Spleen (tissue), 13 donors: ENCODE measurements at regions of chr2 and their contacts with region 1.

Region 1: GRCh38 chr2:168118733-168119514 is 128.5 kb downstream of the STK39 start:
- DNase-seq: no peak
- H3K4me3 ChIP-seq: no peak overlapping the region
- H3K27ac ChIP-seq: peak overlapping the region in 3 of 8 donors; percentile 4 to 28 (median 24)
- H3K4me1 ChIP-seq: peaks cover 0 to 16% (median 8%) of the 10 kb centered on the region in 6 donors
- H3K27me3 ChIP-seq: no peaks in the 10 kb centered on the region
- CTCF ChIP-seq: peak; percentile 19 to 76 (median 52)
- POLR2A ChIP-seq: no peak

Region 2: GRCh38 chr2:166539340-166540162 is 1579.4 kb before region 1 on chr2:
- intact Hi-C with region 1: loop called (anchors 5 kb)
- DNase-seq: no peak
- H3K4me3 ChIP-seq: no peak overlapping the region
- H3K27ac ChIP-seq: no peak overlapping the region
- H3K4me1 ChIP-seq: peaks cover 0 to 4% (median 2%) of the 10 kb centered on the region in 6 donors
- H3K27me3 ChIP-seq: no peaks in the 10 kb centered on the region
- CTCF ChIP-seq: peak; percentile 41 to 81 (median 65)
- POLR2A ChIP-seq: no peak

Region 3: GRCh38 chr2:167964650-167965413 is 154.1 kb before region 1 on chr2:
- intact Hi-C with region 1: loop called (anchors 10 kb)
- DNase-seq: no peak
- H3K4me3 ChIP-seq: no peak overlapping the region
- H3K27ac ChIP-seq: no peak overlapping the region
- H3K4me1 ChIP-seq: no peaks in the 10 kb centered on the region
- H3K27me3 ChIP-seq: no peaks in the 10 kb centered on the region
- CTCF ChIP-seq: no peak
- POLR2A ChIP-seq: no peak

Region 4: DNA sequence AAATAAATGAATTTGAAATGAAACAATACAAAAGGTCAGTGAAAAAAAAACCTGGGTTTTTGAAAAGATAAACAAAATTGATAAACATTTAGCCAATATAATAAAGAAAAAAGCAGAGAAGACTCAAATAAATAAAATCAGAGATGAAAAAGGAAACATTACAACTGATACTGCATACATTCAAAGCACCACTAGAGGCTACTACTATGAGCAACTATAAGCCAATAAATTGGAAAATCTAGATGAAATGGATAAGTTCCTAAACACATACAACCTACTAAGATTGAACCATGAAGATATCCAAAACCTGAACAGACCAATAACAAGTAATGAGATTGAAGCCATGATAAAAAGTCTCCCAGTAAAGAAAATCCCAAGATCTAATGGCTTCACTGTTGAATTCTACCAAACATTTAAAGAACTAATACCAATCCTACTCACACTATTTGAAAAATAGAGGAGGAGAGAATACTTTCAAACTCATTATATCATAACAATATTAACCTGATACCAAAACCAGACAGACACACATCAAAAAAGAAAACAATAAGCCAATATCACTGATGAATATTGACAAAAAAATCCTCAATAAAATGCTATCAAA is 256.4 kb after region 1 on chr2:
- intact Hi-C with region 1: no loop called
- DNase-seq: no peak
- H3K4me3 ChIP-seq: no peak overlapping the region
- H3K27ac ChIP-seq: no peak overlapping the region
- H3K4me1 ChIP-seq: peaks cover 0 to 8% (median 0%) of the 10 kb centered on the region in 6 donors
- H3K27me3 ChIP-seq: no peaks in the 10 kb centered on the region
- CTCF ChIP-seq: peak in 3 of 11 experiments; percentile 8 to 23 (median 23)
- POLR2A ChIP-seq: no peak

Region 5: DNA sequence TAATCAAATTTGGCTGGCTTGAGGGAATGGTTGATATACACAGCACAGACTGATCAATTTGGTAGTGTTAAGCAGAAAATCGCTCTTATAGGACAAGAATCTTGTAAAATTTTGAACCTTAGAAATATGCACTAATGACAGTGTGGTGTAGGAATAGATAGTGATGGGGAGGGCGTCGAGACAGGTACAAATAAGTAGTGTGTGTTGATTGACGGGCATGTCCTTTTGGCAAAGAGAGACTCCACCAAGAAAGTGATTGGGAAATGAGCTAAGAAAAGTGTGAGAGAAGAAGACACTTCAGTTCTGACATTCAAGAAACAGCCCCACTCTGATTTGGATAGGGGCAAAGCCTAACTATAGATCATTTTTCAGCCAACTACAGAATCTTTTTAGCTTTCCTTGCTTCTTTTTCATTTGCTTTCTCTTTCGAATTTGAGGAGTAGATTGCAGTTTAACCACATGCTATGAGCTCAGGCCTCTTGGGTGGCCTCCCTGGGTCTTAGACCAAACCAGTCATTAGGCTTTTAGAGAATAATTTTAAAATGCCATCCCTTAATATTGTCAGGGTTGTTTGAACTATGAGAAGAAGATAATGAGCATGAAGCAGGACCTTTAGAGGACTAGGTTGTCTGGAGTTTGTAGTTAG is 464.3 kb after region 1 on chr2:
- intact Hi-C with region 1: no loop called
- DNase-seq: no peak
- H3K4me3 ChIP-seq: no peak overlapping the region
- H3K27ac ChIP-seq: peak overlapping the region in 3 of 8 donors; percentile 4 to 38 (median 36)
- H3K4me1 ChIP-seq: peaks cover 0 to 44% (median 7%) of the 10 kb centered on the region in 6 donors
- H3K27me3 ChIP-seq: no peaks in the 10 kb centered on the region
- CTCF ChIP-seq: no peak
- POLR2A ChIP-seq: no peak